Right ventricle myocardium inferior (tissue), 1 donor: ENCODE measurements at regions of chr6 and their contacts with region 1.

Region 1: DNA sequence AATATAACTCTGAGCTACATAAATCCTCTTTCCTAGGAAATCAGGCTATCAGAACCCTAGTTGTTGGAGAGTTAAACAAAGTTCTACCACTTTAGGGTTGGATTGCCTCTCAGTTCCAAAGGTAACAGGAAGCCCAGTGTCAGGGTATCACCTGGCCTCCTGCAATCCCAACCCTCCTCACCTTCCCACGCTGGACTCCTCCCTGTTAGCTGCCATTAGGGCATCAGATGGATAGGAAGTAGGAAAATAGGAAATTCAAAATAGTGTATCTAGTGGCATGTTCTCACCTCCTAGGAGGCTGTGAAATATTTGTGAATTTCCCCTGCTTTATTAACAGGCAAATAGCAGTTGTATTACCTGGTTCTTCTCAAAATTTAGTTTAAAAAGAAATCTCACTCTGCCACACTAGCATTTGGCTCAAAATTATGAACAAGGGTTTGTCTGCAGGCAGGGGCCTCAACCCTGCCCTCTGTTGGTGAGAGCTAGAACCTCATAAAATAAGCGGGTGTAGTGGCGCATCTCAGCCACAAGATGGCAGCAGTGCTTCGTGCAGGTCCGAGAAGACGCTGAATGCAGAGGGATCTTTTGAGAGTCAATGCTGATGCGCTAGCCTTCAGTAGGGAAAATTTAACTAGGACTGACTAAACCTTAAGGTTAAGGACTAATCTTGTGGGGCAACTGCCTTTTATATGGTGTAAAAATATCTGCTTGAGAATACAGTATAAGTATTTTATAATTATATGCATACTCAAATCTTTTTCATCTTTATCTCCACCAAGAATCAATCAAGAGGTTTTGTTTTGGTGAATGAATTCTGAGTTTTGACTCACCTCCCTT is 209.8 kb upstream of the KCNQ5 start:
- DNase-seq: peak; percentile 75
- ATAC-seq: peak; percentile 83

Region 2: DNA sequence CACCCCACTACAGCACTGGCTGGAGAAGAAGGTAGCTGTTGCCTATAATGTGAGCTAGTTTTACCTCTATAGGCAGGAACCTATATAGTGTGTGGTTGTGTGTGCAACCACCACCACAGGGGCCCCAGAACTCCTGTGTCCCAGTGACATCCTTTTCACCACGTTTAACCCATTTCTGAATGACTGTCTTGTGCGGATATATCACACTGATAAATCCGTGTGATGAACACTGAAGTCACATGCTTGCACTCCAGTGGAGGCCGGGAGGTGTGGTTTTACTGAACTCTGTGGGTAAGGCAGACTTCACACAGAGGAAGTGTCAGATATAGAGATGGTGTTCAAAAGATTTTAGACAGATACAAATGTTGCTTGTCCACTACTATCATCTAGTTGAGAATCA is 1812.9 kb before region 1 on chr6:
- intact Hi-C with region 1: no loop called
- DNase-seq: no peak
- ATAC-seq: no peak

Region 3: GRCh38 chr6:73129653-73130443 is 717.8 kb after region 1 on chr6:
- intact Hi-C with region 1: loop called (anchors 10 kb)
- DNase-seq: peak; percentile 80
- ATAC-seq: peak; percentile 37

Region 4: DNA sequence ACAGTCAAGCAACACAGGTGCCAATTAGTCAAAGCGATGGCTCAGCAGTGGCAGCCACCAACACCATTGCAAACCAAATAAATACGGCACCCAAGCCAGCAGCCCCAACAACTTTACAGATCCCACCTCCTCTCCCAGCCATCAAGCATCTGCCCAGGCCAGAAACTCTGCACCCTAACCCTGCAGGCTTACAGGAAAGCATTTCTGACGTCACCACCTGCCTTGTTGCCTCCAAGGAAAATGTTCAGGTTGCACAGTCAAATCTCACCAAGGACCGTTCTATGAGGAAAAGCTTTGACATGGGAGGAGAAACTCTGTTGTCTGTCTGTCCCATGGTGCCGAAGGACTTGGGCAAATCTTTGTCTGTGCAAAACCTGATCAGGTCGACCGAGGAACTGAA is 782.7 kb after region 1 on chr6:
- intact Hi-C with region 1: loop called (anchors 2 kb)
- DNase-seq: no peak
- ATAC-seq: no peak

Region 5: DNA sequence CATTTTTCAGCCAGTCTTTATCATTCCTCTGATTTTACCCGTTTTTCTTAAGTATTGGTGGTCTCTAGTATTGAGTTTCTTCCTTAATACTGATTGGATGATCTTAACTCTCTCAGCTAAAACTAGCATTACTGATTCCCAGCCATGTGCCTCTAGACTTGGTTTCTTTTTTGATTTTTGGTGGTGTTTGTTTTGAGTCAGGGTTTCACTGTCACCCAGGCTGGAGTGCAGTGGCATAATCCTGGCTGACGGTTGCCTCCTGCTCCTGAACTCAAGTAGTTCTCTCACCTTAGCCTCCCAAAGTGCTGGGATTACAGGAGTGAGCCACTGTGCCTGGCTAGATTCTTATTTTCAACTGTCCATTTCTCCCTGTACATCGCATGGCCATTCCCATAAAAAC is 917.1 kb after region 1 on chr6:
- intact Hi-C with region 1: loop called (anchors 5 kb)
- DNase-seq: no peak
- ATAC-seq: no peak